ENCODE measurements at regions of chr13 and their contacts with region 1.

Region 1: GRCh38 chr13:68439821-68440220 is 1209.7 kb upstream of the PCDH9 start:
- DNase-seq: peak; percentile 36
- ATAC-seq: no peak
- H3K4me3 ChIP-seq: no peak overlapping the region
- H3K27ac ChIP-seq: peak overlapping the region; percentile 51; the same call in 1 of the 2 replicates
- H3K4me1 ChIP-seq: no peaks in the 10 kb centered on the region
- H3K27me3 ChIP-seq: no peaks in the 10 kb centered on the region
- CTCF ChIP-seq: no peak

Region 2: DNA sequence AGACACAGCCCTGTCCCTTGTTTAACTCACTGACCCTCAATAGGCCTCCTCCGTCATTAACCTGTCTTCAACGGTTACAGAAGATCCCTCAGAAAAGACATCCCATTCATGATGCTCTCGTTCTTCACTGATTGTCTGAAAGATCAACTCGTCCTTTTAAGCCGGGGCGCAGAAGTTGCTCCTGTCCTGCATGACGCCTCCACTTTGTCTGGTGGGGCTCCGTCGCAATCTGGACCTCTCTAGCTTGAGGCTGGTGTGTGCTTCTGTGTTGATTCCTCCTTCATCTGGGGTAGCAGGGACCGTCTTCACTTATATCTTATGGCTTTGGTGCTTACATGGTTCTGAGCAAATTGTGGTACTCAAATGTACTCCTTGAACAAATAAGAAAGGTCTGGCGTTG is 443.7 kb before region 1 on chr13:
- CTCF ChIA-PET with region 1: no interaction called
- POLR2A ChIA-PET with region 1: no interaction called
- in situ Hi-C with region 1: no loop called
- intact Hi-C with region 1: loop called (anchors 5 kb)
- DNase-seq: no peak
- ATAC-seq: no peak
- H3K4me3 ChIP-seq: no peak overlapping the region
- H3K27ac ChIP-seq: no peak overlapping the region
- H3K4me1 ChIP-seq: no peaks in the 10 kb centered on the region
- H3K27me3 ChIP-seq: no peaks in the 10 kb centered on the region
- CTCF ChIP-seq: no peak

Region 3: GRCh38 chr13:68125087-68125480 is 314.7 kb before region 1 on chr13:
- CTCF ChIA-PET with region 1: no interaction called
- POLR2A ChIA-PET with region 1: no interaction called
- in situ Hi-C with region 1: no loop called
- intact Hi-C with region 1: no loop called
- DNase-seq: no peak
- ATAC-seq: no peak
- H3K4me3 ChIP-seq: no peak overlapping the region
- H3K27ac ChIP-seq: no peak overlapping the region
- H3K4me1 ChIP-seq: no peaks in the 10 kb centered on the region
- H3K27me3 ChIP-seq: no peaks in the 10 kb centered on the region
- CTCF ChIP-seq: no peak

Measured in Panc1 (cell line).